ENCODE measurements at regions of chr4 and their contacts with region 1.

Region 1: DNA sequence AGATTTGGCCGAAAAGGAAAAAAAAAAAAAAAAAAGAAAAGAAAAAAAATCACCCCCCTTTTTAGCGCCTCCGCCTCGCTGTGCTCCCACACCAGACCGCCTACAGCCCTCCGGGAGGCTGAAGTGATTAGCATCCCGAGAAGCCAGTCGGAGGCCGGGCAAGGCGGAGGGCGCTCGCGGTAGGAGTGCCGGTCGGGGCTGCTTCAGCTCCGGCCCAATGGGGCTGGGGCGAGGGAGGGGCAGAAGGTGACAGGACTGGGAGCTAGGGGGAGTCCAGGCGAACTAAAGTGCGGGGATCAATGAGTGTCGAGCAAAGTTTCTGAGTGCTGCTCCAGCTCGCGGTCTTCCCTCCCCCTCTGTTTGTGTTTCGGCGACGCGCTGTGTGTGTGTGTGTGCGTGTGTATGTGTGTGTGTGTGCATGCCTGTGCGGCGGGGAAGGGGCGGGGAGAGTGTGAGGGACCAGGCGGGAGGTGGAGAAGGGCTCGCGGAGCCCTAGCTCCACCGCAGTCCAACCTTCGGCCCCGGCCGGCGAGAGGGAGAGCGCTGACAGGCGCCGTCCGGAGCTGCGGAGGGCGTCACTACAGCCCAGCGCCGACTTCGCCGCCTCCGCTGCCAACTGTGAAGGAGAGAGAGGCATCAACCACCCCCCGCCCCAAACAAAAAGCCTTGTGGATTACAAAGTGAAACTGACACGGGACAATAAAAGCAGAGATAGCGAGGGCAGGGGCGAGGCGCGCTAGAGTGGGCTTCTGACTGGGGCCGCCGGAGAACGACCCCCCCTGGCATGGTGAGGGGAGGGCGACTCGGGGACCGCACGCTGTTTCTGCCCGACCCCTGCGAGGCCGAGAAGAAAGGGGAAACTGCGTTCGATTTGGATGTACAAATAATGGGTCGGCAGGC is at the start of gene FAT4:
- DNase-seq: peak; percentile 99
- H3K4me3 ChIP-seq: peak within 1 kb of the TSS; percentile 58 to 90 (median 82)
- H3K27ac ChIP-seq: peak within 1 kb of the TSS; percentile 82
- H3K4me1 ChIP-seq: peaks cover 29% of the 10 kb centered on the region
- H3K27me3 ChIP-seq: no peaks in the 10 kb centered on the region
- CTCF ChIP-seq: no peak
- POLR2A ChIP-seq: peak; percentile 79
- total RNA-seq, gene FAT4: 33.2 and 39.1 TPM in 2 replicates

Region 2: GRCh38 chr4:125198916-125199315 is 116.0 kb before region 1 on chr4:
- CTCF ChIA-PET with region 1: no interaction called
- POLR2A ChIA-PET with region 1: no interaction called
- dilution Hi-C with region 1: no loop called
- intact Hi-C with region 1: no loop called
- DNase-seq: peak; percentile 84
- H3K4me3 ChIP-seq: no peak overlapping the region
- H3K27ac ChIP-seq: peak overlapping the region; percentile 90
- H3K4me1 ChIP-seq: peaks cover 18% of the 10 kb centered on the region
- H3K27me3 ChIP-seq: no peaks in the 10 kb centered on the region
- CTCF ChIP-seq: no peak
- POLR2A ChIP-seq: no peak

Region 3: GRCh38 chr4:125432104-125432503 is 117.2 kb after region 1 on chr4:
- CTCF ChIA-PET with region 1: interaction called, 4 read pairs
- POLR2A ChIA-PET with region 1: no interaction called
- dilution Hi-C with region 1: no loop called
- intact Hi-C with region 1: loop called (anchors 2 kb)
- DNase-seq: no peak
- H3K4me3 ChIP-seq: no peak overlapping the region
- H3K27ac ChIP-seq: no peak overlapping the region
- H3K4me1 ChIP-seq: peaks cover 6% of the 10 kb centered on the region
- H3K27me3 ChIP-seq: no peaks in the 10 kb centered on the region
- CTCF ChIP-seq: no peak
- POLR2A ChIP-seq: no peak

Region 4: GRCh38 chr4:125741825-125742452 is 427.0 kb after region 1 on chr4:
- CTCF ChIA-PET with region 1: interaction called, 29 read pairs
- POLR2A ChIA-PET with region 1: no interaction called
- dilution Hi-C with region 1: no loop called
- intact Hi-C with region 1: loop called (anchors 1 kb)
- DNase-seq: peak; percentile 61
- H3K4me3 ChIP-seq: no peak overlapping the region
- H3K27ac ChIP-seq: peak overlapping the region; percentile 96
- H3K4me1 ChIP-seq: peaks cover 33% of the 10 kb centered on the region
- H3K27me3 ChIP-seq: no peaks in the 10 kb centered on the region
- CTCF ChIP-seq: peak; percentile 49 to 50
- POLR2A ChIP-seq: no peak

Region 5: DNA sequence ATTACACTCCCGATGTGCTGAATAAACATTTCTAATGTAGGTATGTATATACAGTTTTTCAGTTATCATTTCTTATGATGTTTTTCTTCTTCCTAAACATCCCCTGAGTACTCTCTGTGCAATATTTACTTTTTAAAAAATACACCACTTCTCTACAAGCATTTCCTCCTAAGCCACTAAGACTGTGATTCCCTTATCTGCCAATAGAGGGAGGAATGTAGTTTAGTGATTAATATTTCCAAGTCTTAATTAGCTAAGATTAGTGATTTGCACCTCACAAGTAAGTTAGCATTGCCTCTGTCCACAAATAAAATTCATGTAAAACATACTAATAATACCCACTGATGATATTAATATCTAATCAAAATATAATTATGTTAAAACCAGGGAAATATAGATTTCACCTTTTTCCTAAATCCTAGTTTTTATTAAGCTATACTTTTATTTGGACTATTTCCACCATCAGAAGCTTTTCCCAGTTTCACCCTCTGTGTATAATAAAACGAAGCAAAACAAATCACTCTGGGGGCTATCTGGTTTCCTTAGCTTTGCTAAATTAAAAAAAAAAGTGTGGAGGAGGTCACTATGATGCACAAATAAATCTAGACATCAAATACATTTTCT is 909.0 kb after region 1 on chr4:
- CTCF ChIA-PET with region 1: interaction called, 4 read pairs
- POLR2A ChIA-PET with region 1: no interaction called
- dilution Hi-C with region 1: no loop called
- intact Hi-C with region 1: loop called (anchors 2 kb)
- DNase-seq: peak; percentile 36
- H3K4me3 ChIP-seq: no peak overlapping the region
- H3K27ac ChIP-seq: no peak overlapping the region
- H3K4me1 ChIP-seq: no peaks in the 10 kb centered on the region
- H3K27me3 ChIP-seq: no peaks in the 10 kb centered on the region
- CTCF ChIP-seq: peak; percentile 29 to 52
- POLR2A ChIP-seq: no peak

Region 6: DNA sequence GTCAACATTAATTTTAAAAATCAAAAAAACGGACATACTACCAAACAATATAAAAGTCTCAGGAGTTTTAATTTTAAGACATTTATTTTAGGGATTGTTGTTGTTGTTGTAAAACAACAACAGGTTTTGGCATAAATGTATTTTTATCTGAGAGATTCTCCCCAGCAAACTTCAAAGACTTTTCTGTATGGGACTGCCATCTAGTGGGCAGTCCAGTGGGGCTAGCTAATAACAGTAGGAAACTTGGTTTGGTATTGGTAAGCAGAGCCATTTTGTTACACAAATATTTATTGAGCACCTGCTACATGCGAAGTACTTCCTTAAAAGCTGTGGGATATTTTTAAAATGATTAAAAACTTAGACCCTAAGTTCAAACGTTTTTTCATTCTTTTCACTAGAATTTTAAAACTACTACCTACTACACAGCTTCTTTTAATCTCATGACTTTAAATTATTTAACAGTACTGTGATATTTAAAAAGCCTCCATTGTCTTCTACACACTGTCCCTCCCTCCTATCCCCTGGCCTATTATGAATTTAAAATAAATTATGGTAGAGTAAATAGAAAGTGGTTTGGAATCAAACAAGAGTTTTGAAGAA is 1289.4 kb after region 1 on chr4:
- CTCF ChIA-PET with region 1: interaction called, 39 read pairs
- POLR2A ChIA-PET with region 1: no interaction called
- dilution Hi-C with region 1: no loop called
- intact Hi-C with region 1: no loop called
- DNase-seq: peak; percentile 39
- H3K4me3 ChIP-seq: no peak overlapping the region
- H3K27ac ChIP-seq: no peak overlapping the region
- H3K4me1 ChIP-seq: no peaks in the 10 kb centered on the region
- H3K27me3 ChIP-seq: no peaks in the 10 kb centered on the region
- CTCF ChIP-seq: peak; percentile 48 to 65
- POLR2A ChIP-seq: no peak